Sigmoid colon (tissue), 7 donors: ENCODE measurements at regions of chr11 and their contacts with region 1.

Region 1: GRCh38 chr11:32960553-32961164 is 55.0 kb upstream of the DEPDC7 start:
- DNase-seq: no peak
- H3K4me3 ChIP-seq: no peak overlapping the region
- H3K27ac ChIP-seq: no peak overlapping the region
- H3K4me1 ChIP-seq: no peaks in the 10 kb centered on the region
- H3K27me3 ChIP-seq: no peaks in the 10 kb centered on the region
- CTCF ChIP-seq: peak in 3 of 4 experiments; percentile 52 to 68 (median 52)
- EP300 ChIP-seq: no peak
- POLR2A ChIP-seq: no peak

Region 2: DNA sequence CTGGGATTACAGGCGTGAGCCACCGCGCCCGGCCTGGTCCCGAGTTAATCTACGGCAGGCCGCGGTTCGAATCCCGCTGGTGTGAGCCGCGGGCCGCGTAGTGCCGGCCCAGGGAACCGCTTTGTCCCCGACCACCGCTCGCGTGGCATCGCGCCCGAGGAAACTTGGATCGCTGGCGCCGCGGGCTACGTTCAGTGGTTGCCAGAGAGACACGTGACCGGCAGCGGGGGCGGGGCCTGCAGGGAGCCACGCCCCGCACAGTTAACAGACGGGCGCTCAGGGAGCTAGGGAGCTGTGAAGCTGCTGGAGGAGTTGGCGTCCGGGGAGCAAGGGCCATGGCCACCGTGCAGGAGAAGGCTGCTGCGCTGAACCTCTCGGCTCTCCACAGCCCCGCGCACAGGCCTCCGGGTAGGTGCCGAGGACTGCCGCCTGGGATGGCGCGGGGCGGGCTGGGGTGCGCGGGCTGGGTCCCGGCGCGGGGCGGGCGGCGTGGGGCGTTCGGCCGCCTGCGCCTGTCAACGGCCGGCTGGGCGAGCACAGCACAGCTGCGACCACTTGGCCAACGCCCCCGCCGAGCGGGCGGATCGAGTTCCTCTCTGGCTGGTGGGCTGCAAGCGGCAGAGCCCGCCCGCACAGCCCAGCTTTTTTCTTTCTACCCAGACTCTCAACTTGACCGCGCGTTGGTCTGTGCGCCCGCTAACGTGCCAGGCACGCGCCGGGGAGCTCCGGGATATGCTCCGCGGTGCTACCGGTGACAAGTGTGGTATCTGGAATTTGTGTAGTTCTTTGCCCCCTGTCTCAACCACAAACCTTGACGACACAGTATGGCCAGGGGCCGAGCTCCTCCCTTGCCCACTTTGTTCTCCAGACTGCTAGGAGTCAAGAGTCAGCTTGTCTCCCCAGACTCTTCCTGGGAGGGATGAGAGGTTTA is 55.2 kb after region 1 on chr11 and contains the start of gene DEPDC7:
- intact Hi-C with region 1: loop called (anchors 10 kb)
- DNase-seq: peak; percentile 94
- H3K4me3 ChIP-seq: peak within 1 kb of the TSS; percentile 40 to 77 (median 66)
- H3K27ac ChIP-seq: peak within 1 kb of the TSS; percentile 62 to 82 (median 74)
- H3K4me1 ChIP-seq: peaks cover 0 to 13% (median 10%) of the 10 kb centered on the region in 4 donors
- H3K27me3 ChIP-seq: no peaks in the 10 kb centered on the region
- CTCF ChIP-seq: no peak
- EP300 ChIP-seq: no peak
- POLR2A ChIP-seq: no peak
- total RNA-seq, gene DEPDC7: 2.0 to 7.5 (median 3.1) TPM

Region 3: GRCh38 chr11:34126959-34127848 is 1166.5 kb after region 1 on chr11:
- intact Hi-C with region 1: no loop called
- DNase-seq: no peak
- H3K4me3 ChIP-seq: no peak overlapping the region
- H3K27ac ChIP-seq: no peak overlapping the region
- H3K4me1 ChIP-seq: no peaks in the 10 kb centered on the region
- H3K27me3 ChIP-seq: no peaks in the 10 kb centered on the region
- CTCF ChIP-seq: no peak
- EP300 ChIP-seq: no peak
- POLR2A ChIP-seq: no peak